ENCODE measurements at regions of chr12 and their contacts with region 1.

Region 1: DNA sequence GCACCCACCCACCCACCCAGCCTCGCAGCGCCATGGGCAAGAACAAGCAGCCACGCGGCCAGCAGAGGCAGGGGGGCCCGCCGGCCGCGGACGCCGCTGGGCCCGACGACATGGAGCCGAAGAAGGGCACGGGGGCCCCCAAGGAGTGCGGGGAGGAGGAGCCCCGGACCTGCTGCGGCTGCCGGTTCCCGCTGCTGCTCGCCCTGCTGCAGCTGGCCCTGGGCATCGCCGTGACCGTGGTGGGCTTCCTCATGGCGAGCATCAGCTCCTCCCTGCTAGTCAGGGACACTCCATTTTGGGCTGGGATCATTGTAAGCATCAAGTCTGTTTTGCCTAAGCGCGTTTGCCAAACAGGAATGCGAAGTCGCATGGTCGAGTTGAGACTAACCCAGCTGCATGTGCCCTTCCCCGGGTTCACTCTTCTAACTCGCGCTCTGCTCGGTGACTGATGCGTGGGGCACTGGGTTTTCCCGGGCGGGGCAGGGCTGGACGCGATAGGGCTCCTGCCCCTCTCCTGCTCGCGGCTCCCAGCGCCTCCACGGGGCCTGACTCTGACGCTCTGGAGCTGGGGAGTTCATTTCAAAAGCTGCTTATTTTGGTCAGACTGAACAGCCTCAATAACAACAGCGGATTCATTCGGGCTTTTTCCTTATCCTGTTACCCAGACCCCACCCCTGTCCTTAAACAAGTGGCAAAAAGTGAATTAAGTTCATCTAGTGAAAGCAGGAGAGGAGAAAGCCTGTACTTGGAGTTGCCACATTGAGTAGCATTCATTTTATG is 458 bp downstream of the SSPN start:
- DNase-seq: peak; percentile 48 to 70 (median 59)
- H3K4me3 ChIP-seq: peak overlapping the region; percentile 59
- H3K27ac ChIP-seq: peak overlapping the region; percentile 72 to 86
- H3K4me1 ChIP-seq: peaks cover 7% of the 10 kb centered on the region
- H3K27me3 ChIP-seq: no peaks in the 10 kb centered on the region
- CTCF ChIP-seq: no peak
- EP300 ChIP-seq: no peak
- POLR2A ChIP-seq: no peak

Region 2: GRCh38 chr12:26126340-26127284 is 69.2 kb before region 1 on chr12:
- intact Hi-C with region 1: loop called in 2 of 4 experiments (anchors 5 to 10 kb)
- DNase-seq: peak; percentile 82 to 85 (median 84)
- H3K4me3 ChIP-seq: peak overlapping the region; percentile 48
- H3K27ac ChIP-seq: peak overlapping the region; percentile 52 to 94
- H3K4me1 ChIP-seq: peaks cover 5% of the 10 kb centered on the region
- H3K27me3 ChIP-seq: no peaks in the 10 kb centered on the region
- CTCF ChIP-seq: no peak
- EP300 ChIP-seq: no peak
- POLR2A ChIP-seq: peak; percentile 13

Region 3: GRCh38 chr12:26274441-26275312 is 78.8 kb after region 1 on chr12:
- intact Hi-C with region 1: loop called in 1 of 4 experiments (anchors 10 kb)
- DNase-seq: peak; percentile 80 to 92 (median 84)
- H3K4me3 ChIP-seq: no peak overlapping the region
- H3K27ac ChIP-seq: peak overlapping the region; percentile 30 to 79
- H3K4me1 ChIP-seq: peaks cover 19% of the 10 kb centered on the region
- H3K27me3 ChIP-seq: no peaks in the 10 kb centered on the region
- CTCF ChIP-seq: no peak
- EP300 ChIP-seq: no peak
- POLR2A ChIP-seq: peak; percentile 45

Region 4: GRCh38 chr12:26318661-26319068 is 122.8 kb after region 1 on chr12:
- intact Hi-C with region 1: loop called in 1 of 4 experiments (anchors 10 kb)
- DNase-seq: peak; percentile 75 to 83 (median 79)
- H3K4me3 ChIP-seq: no peak overlapping the region
- H3K27ac ChIP-seq: peak overlapping the region in 1 of 2 donors; percentile 36
- H3K4me1 ChIP-seq: peaks cover 11% of the 10 kb centered on the region
- H3K27me3 ChIP-seq: no peaks in the 10 kb centered on the region
- CTCF ChIP-seq: no peak
- EP300 ChIP-seq: no peak
- POLR2A ChIP-seq: no peak

Measured in ovary (tissue), 10 donors.